PC-3 (cell line): ENCODE measurements at regions of chr17 and their contacts with region 1.

Region 1: GRCh38 chr17:30950669-30951399 is 20.0 kb upstream of the RNF135 start:
- DNase-seq: peak; percentile 46
- ATAC-seq: peak; percentile 35
- H3K4me3 ChIP-seq: no peak overlapping the region
- H3K27ac ChIP-seq: no peak overlapping the region
- H3K4me1 ChIP-seq: no peaks in the 10 kb centered on the region
- H3K27me3 ChIP-seq: no peaks in the 10 kb centered on the region
- CTCF ChIP-seq: no peak

Region 2: DNA sequence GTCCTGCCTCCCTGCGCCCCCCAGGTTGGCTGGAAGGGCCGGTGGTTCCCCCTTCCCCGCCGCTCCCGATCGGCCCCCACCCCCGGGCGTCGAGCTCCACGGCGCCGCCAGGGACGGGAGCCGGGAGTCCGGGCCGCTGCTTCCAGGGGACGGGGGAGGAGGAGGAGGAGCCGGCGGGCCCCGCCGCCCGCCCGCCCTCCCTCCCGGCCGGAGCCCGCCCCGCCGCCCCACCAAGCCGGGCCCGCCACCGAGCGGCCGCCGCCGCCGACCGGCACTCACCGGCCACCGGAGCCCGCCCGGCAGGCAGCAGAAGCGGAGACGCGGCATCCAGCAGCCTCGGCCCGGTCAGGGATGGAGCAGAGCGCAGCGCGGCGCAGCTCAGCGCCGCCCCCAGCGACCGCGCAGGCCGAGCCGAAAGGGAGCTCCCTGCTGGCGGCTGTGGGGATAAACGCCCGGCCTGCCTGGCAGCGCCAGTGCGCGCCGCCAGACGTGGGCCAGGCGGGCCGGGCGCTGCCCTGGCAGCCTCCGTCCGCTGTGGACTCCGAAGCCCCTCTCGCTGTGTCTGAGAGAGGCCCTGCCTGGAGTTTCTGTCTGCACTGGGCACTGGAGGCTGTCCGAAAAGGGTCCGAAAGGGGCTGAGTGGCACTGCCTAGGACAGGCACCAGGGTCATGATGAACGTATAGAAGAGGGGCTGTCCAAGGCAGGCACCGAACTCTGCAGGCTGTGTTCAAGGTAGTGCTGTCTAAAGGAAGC is 1770.6 kb before region 1 on chr17 and contains the start of gene MYO18A:
- CTCF ChIA-PET with region 1: no interaction called
- POLR2A ChIA-PET with region 1: no interaction called
- intact Hi-C with region 1: no loop called
- DNase-seq: peak; percentile 76
- ATAC-seq: peak; percentile 74
- H3K4me3 ChIP-seq: peak within 1 kb of the TSS; percentile 72
- H3K27ac ChIP-seq: peak within 1 kb of the TSS; percentile 81
- H3K4me1 ChIP-seq: peaks cover 44% of the 10 kb centered on the region
- H3K27me3 ChIP-seq: no peaks in the 10 kb centered on the region
- CTCF ChIP-seq: peak; percentile 60
- total RNA-seq, gene MYO18A: 28.0 and 36.1 TPM in 2 replicates

Region 3: GRCh38 chr17:30761058-30761457 is 189.8 kb before region 1 on chr17:
- CTCF ChIA-PET with region 1: no interaction called
- POLR2A ChIA-PET with region 1: no interaction called
- intact Hi-C with region 1: no loop called
- DNase-seq: no peak
- ATAC-seq: no peak
- H3K4me3 ChIP-seq: no peak overlapping the region
- H3K27ac ChIP-seq: no peak overlapping the region
- H3K4me1 ChIP-seq: no peaks in the 10 kb centered on the region
- H3K27me3 ChIP-seq: no peaks in the 10 kb centered on the region
- CTCF ChIP-seq: no peak

Region 4: DNA sequence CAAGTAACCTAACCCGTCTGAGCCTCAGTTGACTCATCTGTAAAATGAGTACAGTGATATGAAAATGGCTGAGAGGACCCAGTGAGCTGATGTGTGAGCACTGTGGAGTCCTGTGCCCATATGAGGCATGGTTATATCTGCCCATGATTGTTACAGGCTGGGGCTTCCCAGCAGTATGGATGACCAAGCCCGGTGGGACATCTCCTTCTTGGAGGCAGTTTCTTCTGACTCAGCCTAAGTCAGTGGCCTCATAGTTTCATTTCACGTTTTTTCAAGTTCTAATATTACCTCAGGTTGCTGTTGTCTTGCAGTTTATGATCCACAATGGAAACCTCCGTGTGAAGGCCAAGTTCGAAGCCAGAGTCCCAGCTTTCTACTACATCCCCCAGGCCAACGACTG is 24.3 kb before region 1 on chr17:
- CTCF ChIA-PET with region 1: interaction called, 14 read pairs
- POLR2A ChIA-PET with region 1: no interaction called
- intact Hi-C with region 1: no loop called
- DNase-seq: no peak
- ATAC-seq: no peak
- H3K4me3 ChIP-seq: no peak overlapping the region
- H3K27ac ChIP-seq: no peak overlapping the region
- H3K4me1 ChIP-seq: 0 out of 2 replicates have a peak, but pooled peaks cover under 1% of the 10 kb centered on the region
- H3K27me3 ChIP-seq: no peaks in the 10 kb centered on the region
- CTCF ChIP-seq: no peak

Region 5: GRCh38 chr17:31002047-31002446 is 51.2 kb after region 1 on chr17:
- CTCF ChIA-PET with region 1: no interaction called
- POLR2A ChIA-PET with region 1: no interaction called
- intact Hi-C with region 1: no loop called
- DNase-seq: no peak
- ATAC-seq: no peak
- H3K4me3 ChIP-seq: no peak overlapping the region
- H3K27ac ChIP-seq: no peak overlapping the region
- H3K4me1 ChIP-seq: no peaks in the 10 kb centered on the region
- H3K27me3 ChIP-seq: no peaks in the 10 kb centered on the region
- CTCF ChIP-seq: no peak